Naive thymus-derived CD4-positive, alpha-beta T cell (primary cell): ENCODE measurements at regions of chr14 and their contacts with region 1.

Region 1: GRCh38 chr14:68816262-68816942 is 23.5 kb upstream of the ZFP36L1 start:
- DNase-seq: peak; percentile 77 to 93 (median 87)
- ATAC-seq: peak; percentile 92
- H3K4me3 ChIP-seq: peak overlapping the region; percentile 63
- H3K4me3 Mint-ChIP-seq: peak overlapping the region; percentile 82 to 95 (median 86)
- H3K27ac ChIP-seq: peak overlapping the region; percentile 95
- H3K27ac Mint-ChIP-seq: peak overlapping the region; percentile 93 to 100 (median 96)
- H3K4me1 ChIP-seq: peaks cover 59 to 62% of the 10 kb centered on the region in 2 donors
- H3K4me1 Mint-ChIP-seq: peaks cover 48 to 89% (median 66%) of the 10 kb centered on the region in 7 donors
- H3K27me3 ChIP-seq: no peaks in the 10 kb centered on the region
- H3K27me3 Mint-ChIP-seq: no peaks in the 10 kb centered on the region

Region 2: GRCh38 chr14:67695394-67695949 is 1120.9 kb before region 1 on chr14 and contains the start of gene RDH11:
- CTCF ChIA-PET with region 1: interaction called, 3 read pairs
- POLR2A ChIA-PET with region 1: no interaction called
- intact Hi-C with region 1: loop called in 1 of 2 experiments (anchors 10 kb)
- DNase-seq: peak; percentile 53 to 89 (median 82)
- ATAC-seq: peak; percentile 97
- H3K4me3 ChIP-seq: peak within 1 kb of the TSS; percentile 88
- H3K4me3 Mint-ChIP-seq: peak within 1 kb of the TSS; percentile 87 to 98 (median 92)
- H3K27ac ChIP-seq: peak within 1 kb of the TSS; percentile 75
- H3K27ac Mint-ChIP-seq: peak within 1 kb of the TSS; percentile 66 to 95 (median 87)
- H3K4me1 ChIP-seq: peaks cover 0 to 3% of the 10 kb centered on the region in 2 donors
- H3K4me1 Mint-ChIP-seq: peaks cover 12 to 32% (median 21%) of the 10 kb centered on the region in 7 donors
- H3K27me3 ChIP-seq: no peaks in the 10 kb centered on the region
- H3K27me3 Mint-ChIP-seq: no peaks in the 10 kb centered on the region
- total RNA-seq, gene RDH11: 22.3 to 44.5 (median 42.6) TPM

Region 3: GRCh38 chr14:67934008-67934481 is 882.4 kb before region 1 on chr14:
- CTCF ChIA-PET with region 1: interaction called, 10 read pairs
- POLR2A ChIA-PET with region 1: interaction called, 4 read pairs
- intact Hi-C with region 1: loop called (anchors 1 to 2 kb)
- DNase-seq: peak in 7 of 9 donors; percentile 24 to 64 (median 43)
- ATAC-seq: peak; percentile 80
- H3K4me3 ChIP-seq: no peak overlapping the region
- H3K4me3 Mint-ChIP-seq: peak overlapping the region in 2 of 10 donors; percentile 15 to 28
- H3K27ac ChIP-seq: peak overlapping the region; percentile 10
- H3K27ac Mint-ChIP-seq: peak overlapping the region in 7 of 9 donors; percentile 2 to 70 (median 56)
- H3K4me1 ChIP-seq: no peaks in the 10 kb centered on the region
- H3K4me1 Mint-ChIP-seq: peaks cover 3 to 11% (median 9%) of the 10 kb centered on the region in 7 donors
- H3K27me3 ChIP-seq: no peaks in the 10 kb centered on the region
- H3K27me3 Mint-ChIP-seq: no peaks in the 10 kb centered on the region

Region 4: GRCh38 chr14:68248481-68249255 is 567.7 kb before region 1 on chr14:
- CTCF ChIA-PET with region 1: interaction called, 219 read pairs
- POLR2A ChIA-PET with region 1: interaction called, 233 read pairs
- intact Hi-C with region 1: loop called (anchors 1 kb)
- DNase-seq: peak in 7 of 9 donors; percentile 34 to 75 (median 64)
- ATAC-seq: peak; percentile 89
- H3K4me3 ChIP-seq: no peak overlapping the region
- H3K4me3 Mint-ChIP-seq: no peak overlapping the region
- H3K27ac ChIP-seq: no peak overlapping the region
- H3K27ac Mint-ChIP-seq: peak overlapping the region in 7 of 9 donors; percentile 41 to 81 (median 64)
- H3K4me1 ChIP-seq: peaks cover 0 to 13% of the 10 kb centered on the region in 2 donors
- H3K4me1 Mint-ChIP-seq: peaks cover 14 to 52% (median 47%) of the 10 kb centered on the region in 7 donors
- H3K27me3 ChIP-seq: no peaks in the 10 kb centered on the region
- H3K27me3 Mint-ChIP-seq: no peaks in the 10 kb centered on the region

Region 5: GRCh38 chr14:68408680-68409079 is 407.7 kb before region 1 on chr14:
- CTCF ChIA-PET with region 1: interaction called, 3 read pairs
- POLR2A ChIA-PET with region 1: interaction called, 3 read pairs
- intact Hi-C with region 1: loop called in 1 of 2 experiments (anchors 1 kb)
- DNase-seq: peak in 4 of 9 donors; percentile 9 to 27 (median 10)
- ATAC-seq: peak; percentile 58
- H3K4me3 ChIP-seq: no peak overlapping the region
- H3K4me3 Mint-ChIP-seq: no peak overlapping the region
- H3K27ac ChIP-seq: no peak overlapping the region
- H3K27ac Mint-ChIP-seq: peak overlapping the region in 2 of 9 donors; percentile 43 to 60
- H3K4me1 ChIP-seq: peaks cover 5 to 19% of the 10 kb centered on the region in 2 donors
- H3K4me1 Mint-ChIP-seq: peaks cover 24 to 43% (median 39%) of the 10 kb centered on the region in 7 donors
- H3K27me3 ChIP-seq: no peaks in the 10 kb centered on the region
- H3K27me3 Mint-ChIP-seq: no peaks in the 10 kb centered on the region

Region 6: GRCh38 chr14:68775143-68776126 is 41.0 kb before region 1 on chr14:
- CTCF ChIA-PET with region 1: interaction called, 25 read pairs
- POLR2A ChIA-PET with region 1: interaction called, 1,273 read pairs
- intact Hi-C with region 1: loop called in 1 of 2 experiments (anchors 5 kb)
- DNase-seq: no peak
- ATAC-seq: no peak
- H3K4me3 ChIP-seq: no peak overlapping the region
- H3K4me3 Mint-ChIP-seq: peak overlapping the region in 2 of 10 donors; percentile 25 to 33
- H3K27ac ChIP-seq: no peak overlapping the region
- H3K27ac Mint-ChIP-seq: peak overlapping the region in 4 of 9 donors; percentile 39 to 68 (median 47)
- H3K4me1 ChIP-seq: peaks cover 26 to 49% of the 10 kb centered on the region in 2 donors
- H3K4me1 Mint-ChIP-seq: peaks cover 47 to 91% (median 80%) of the 10 kb centered on the region in 7 donors
- H3K27me3 ChIP-seq: no peaks in the 10 kb centered on the region
- H3K27me3 Mint-ChIP-seq: no peaks in the 10 kb centered on the region

Region 7: DNA sequence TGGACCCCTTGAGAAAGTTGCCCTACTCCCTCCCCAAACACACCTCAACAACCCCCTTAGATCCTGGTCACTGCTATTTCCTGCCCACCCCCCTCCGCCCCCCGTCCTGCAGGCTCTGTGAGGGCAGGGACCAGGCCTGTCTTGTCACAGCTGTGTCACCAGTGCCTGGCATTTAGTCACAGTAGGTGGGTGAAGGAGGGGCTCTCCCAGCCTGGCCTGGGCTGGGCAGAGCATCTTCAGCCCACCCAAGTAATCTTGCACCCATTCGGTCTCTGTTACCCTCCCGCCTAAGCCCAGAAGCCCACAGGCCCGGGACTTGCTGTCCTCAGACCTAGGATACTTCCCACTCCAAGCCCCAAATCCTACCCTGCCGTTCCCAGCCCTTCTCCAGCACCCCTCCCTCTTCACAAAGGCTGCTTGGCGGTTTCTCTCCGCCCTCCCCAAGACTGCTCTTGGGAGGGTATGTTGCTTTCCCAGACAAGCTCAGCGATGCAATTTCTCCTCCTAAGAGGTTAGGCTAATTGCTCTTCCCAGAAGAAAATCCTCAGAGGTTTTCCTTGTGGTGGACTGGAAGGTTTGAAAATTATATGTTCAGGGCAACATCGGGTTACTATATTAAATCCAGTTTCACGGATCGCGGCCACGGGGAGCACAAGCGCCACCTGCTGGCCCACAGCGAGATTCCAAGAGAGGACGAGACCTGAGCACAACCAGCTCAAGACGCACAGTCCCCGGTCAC is 27.2 kb after region 1 on chr14:
- CTCF ChIA-PET with region 1: interaction called, 28 read pairs
- POLR2A ChIA-PET with region 1: interaction called, 7 read pairs
- intact Hi-C with region 1: loop called in 1 of 2 experiments (anchors 1 kb)
- DNase-seq: peak; percentile 42 to 76 (median 68)
- ATAC-seq: peak; percentile 86
- H3K4me3 ChIP-seq: no peak overlapping the region
- H3K4me3 Mint-ChIP-seq: peak overlapping the region in 9 of 10 donors; percentile 30 to 62 (median 48)
- H3K27ac ChIP-seq: no peak overlapping the region
- H3K27ac Mint-ChIP-seq: peak overlapping the region in 3 of 9 donors; percentile 12 to 47 (median 29)
- H3K4me1 ChIP-seq: peaks cover 7 to 12% of the 10 kb centered on the region in 2 donors
- H3K4me1 Mint-ChIP-seq: peaks cover 12 to 34% (median 15%) of the 10 kb centered on the region in 7 donors
- H3K27me3 ChIP-seq: no peaks in the 10 kb centered on the region
- H3K27me3 Mint-ChIP-seq: peaks cover 0 to 9% (median 0%) of the 10 kb centered on the region in 5 donors

Region 8: GRCh38 chr14:68862954-68863594 is 46.7 kb after region 1 on chr14:
- CTCF ChIA-PET with region 1: no interaction called
- POLR2A ChIA-PET with region 1: no interaction called
- intact Hi-C with region 1: no loop called
- DNase-seq: peak; percentile 33 to 66 (median 53)
- ATAC-seq: peak; percentile 68
- H3K4me3 ChIP-seq: no peak overlapping the region
- H3K4me3 Mint-ChIP-seq: no peak overlapping the region
- H3K27ac ChIP-seq: no peak overlapping the region
- H3K27ac Mint-ChIP-seq: peak overlapping the region in 2 of 9 donors; percentile 15 to 48
- H3K4me1 ChIP-seq: no peaks in the 10 kb centered on the region
- H3K4me1 Mint-ChIP-seq: peaks cover 0 to 2% (median 0%) of the 10 kb centered on the region in 7 donors
- H3K27me3 ChIP-seq: no peaks in the 10 kb centered on the region
- H3K27me3 Mint-ChIP-seq: no peaks in the 10 kb centered on the region

Region 9: GRCh38 chr14:69945912-69946311 is 1129.5 kb after region 1 on chr14:
- CTCF ChIA-PET with region 1: no interaction called
- POLR2A ChIA-PET with region 1: no interaction called
- intact Hi-C with region 1: no loop called
- DNase-seq: no peak
- ATAC-seq: no peak
- H3K4me3 ChIP-seq: no peak overlapping the region
- H3K4me3 Mint-ChIP-seq: no peak overlapping the region
- H3K27ac ChIP-seq: no peak overlapping the region
- H3K27ac Mint-ChIP-seq: no peak overlapping the region
- H3K4me1 ChIP-seq: no peaks in the 10 kb centered on the region
- H3K4me1 Mint-ChIP-seq: peaks cover 0 to 5% (median 0%) of the 10 kb centered on the region in 7 donors
- H3K27me3 ChIP-seq: no peaks in the 10 kb centered on the region
- H3K27me3 Mint-ChIP-seq: peaks cover 10 to 66% (median 35%) of the 10 kb centered on the region in 5 donors